ENCODE measurements at regions of chr1 and their contacts with region 1.

Region 1: GRCh38 chr1:112715264-112716053 is at the start of gene PPM1J:
- DNase-seq: peak; percentile 70
- H3K4me3 ChIP-seq: peak within 1 kb of the TSS; percentile 68
- H3K27ac ChIP-seq: peak within 1 kb of the TSS; percentile 39
- H3K27me3 ChIP-seq: peaks cover 3% of the 10 kb centered on the region
- CTCF ChIP-seq: no peak
- polyA plus RNA-seq, gene PPM1J: 1.3 and 2.1 TPM in 2 replicates

Region 2: GRCh38 chr1:112390775-112391602 is 324.5 kb before region 1 on chr1:
- CTCF ChIA-PET with region 1: interaction called, 16 read pairs
- POLR2A ChIA-PET with region 1: interaction called, 3 read pairs
- DNase-seq: peak; percentile 84
- H3K4me3 ChIP-seq: peak overlapping the region; percentile 45
- H3K27ac ChIP-seq: peak overlapping the region; percentile 66
- H3K27me3 ChIP-seq: peaks cover 3% of the 10 kb centered on the region
- CTCF ChIP-seq: peak; percentile 88

Region 3: GRCh38 chr1:112744009-112744578 is 28.6 kb after region 1 on chr1:
- CTCF ChIA-PET with region 1: interaction called, 85 read pairs
- POLR2A ChIA-PET with region 1: no interaction called
- DNase-seq: no peak
- H3K4me3 ChIP-seq: peak overlapping the region; percentile 47
- H3K27ac ChIP-seq: no peak overlapping the region
- H3K27me3 ChIP-seq: peaks cover 9% of the 10 kb centered on the region
- CTCF ChIP-seq: peak; percentile 72

Region 4: GRCh38 chr1:112790920-112791722 is 75.7 kb after region 1 on chr1:
- CTCF ChIA-PET with region 1: interaction called, 18 read pairs
- POLR2A ChIA-PET with region 1: no interaction called
- DNase-seq: no peak
- H3K4me3 ChIP-seq: no peak overlapping the region
- H3K27ac ChIP-seq: no peak overlapping the region
- H3K27me3 ChIP-seq: no peaks in the 10 kb centered on the region
- CTCF ChIP-seq: no peak

Region 5: DNA sequence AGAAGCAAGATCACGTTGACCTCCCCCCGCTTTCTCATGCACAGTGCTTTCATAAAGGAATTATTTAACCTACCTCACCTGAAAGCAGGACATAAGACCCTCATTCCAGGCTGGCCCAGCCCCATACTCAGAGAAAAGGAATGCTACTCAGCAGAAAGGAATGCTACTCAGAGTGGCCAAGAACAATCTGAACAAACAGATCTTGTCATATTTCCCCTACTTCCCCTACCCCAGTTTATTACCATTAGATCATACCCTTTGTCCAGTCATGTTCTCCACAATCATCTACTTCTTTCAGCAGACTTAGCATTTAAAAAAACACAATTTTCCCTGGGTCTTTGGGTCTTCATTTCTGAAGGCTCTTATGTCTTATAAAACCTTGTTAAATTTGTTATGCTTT is 150.7 kb after region 1 on chr1:
- CTCF ChIA-PET with region 1: interaction called, 10 read pairs
- POLR2A ChIA-PET with region 1: no interaction called
- DNase-seq: peak; percentile 32
- H3K4me3 ChIP-seq: no peak overlapping the region
- H3K27ac ChIP-seq: no peak overlapping the region
- H3K27me3 ChIP-seq: no peaks in the 10 kb centered on the region
- CTCF ChIP-seq: no peak

Region 6: DNA sequence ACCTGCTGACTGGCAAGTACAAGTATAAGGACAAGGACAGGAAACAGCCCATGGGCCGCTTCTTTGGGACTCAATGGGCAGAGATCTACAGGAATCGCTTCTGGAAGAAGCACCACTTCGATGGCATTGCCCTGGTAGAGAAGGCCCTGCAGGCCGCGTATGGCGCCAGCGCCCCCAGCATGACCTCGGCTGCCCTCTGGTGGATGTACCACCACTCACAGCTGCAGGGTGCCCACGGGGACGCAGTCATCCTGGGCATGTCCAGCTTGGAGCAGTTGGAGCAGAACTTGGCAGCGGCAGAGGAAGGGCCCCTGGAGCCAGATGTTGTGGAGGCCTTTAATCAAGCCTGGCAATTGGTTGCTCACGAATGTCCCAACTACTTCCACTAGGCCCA is 208.5 kb after region 1 on chr1:
- CTCF ChIA-PET with region 1: no interaction called
- POLR2A ChIA-PET with region 1: no interaction called
- DNase-seq: no peak
- H3K4me3 ChIP-seq: no peak overlapping the region
- H3K27ac ChIP-seq: no peak overlapping the region
- H3K27me3 ChIP-seq: no peaks in the 10 kb centered on the region
- CTCF ChIP-seq: no peak

Region 7: GRCh38 chr1:112955781-112956543 is 240.5 kb after region 1 on chr1 and contains the start of gene SLC16A1:
- CTCF ChIA-PET with region 1: interaction called, 15 read pairs
- POLR2A ChIA-PET with region 1: interaction called, 5 read pairs
- DNase-seq: peak; percentile 87
- H3K4me3 ChIP-seq: peak within 1 kb of the TSS; percentile 95
- H3K27ac ChIP-seq: peak within 1 kb of the TSS; percentile 91
- H3K27me3 ChIP-seq: no peaks in the 10 kb centered on the region
- CTCF ChIP-seq: peak; percentile 40
- polyA plus RNA-seq, gene SLC16A1: 62.1 and 78.7 TPM in 2 replicates

Measured in AG04450 (cell line).